HepG2 (cell line): ENCODE measurements at regions of chr5 and their contacts with region 1.

Region 1: DNA sequence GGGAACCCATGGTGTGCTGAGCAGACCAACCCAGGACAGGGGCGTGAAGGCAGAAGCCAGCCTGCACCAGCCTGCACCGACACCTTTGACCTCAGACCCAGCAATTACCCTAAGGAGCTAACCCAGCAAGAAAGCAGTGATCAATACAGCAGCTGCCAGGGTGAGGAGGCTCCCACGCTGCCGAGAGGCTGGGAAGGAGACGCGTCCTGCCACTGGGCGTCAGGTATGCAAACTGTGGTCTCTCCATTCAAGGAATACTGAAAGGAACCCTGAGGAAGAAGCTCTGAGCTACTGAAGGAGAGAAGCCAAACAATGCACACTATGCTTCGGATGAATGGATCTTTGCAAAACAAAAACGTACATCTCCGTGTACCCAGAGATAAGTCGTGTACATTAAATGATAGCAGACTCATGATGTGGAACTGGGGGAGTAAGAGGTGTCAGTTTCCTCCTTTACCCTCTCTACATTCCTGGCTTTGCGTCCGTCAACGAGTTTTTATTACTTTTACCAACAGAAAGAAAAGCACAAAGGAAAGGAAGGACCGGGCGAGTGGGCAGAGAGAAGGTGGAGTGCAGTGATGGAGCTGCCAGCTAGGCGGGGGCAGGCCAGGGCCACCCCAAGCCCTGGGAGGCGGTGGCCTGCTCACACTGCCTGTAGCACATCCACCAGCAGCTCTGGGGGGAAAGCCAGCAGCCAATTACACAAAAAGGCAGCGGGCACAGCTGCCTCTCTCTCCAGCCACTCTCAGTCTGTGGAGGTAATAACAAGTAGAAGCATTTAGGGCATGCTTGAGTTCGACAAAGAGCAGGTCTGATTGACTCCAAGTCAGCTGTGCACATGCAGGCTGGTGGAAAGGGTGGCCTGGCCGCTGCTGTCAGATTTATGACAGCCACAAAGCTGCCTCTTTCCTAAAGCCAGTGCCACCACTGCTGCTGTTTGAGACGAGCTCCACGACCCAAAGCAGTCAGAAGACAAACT is 29.3 kb downstream of the RASGEF1C start:
- DNase-seq: no peak
- ATAC-seq: no peak
- H3K4me3 ChIP-seq: no peak overlapping the region
- H3K27ac ChIP-seq: no peak overlapping the region
- H3K4me1 ChIP-seq: peaks cover 13% of the 10 kb centered on the region
- H3K27me3 ChIP-seq: peaks cover 5 to 36% of the 10 kb centered on the region in 2 experiments; a peak in 2 of 5 replicates
- CTCF ChIP-seq: no peak
- EP300 ChIP-seq: no peak
- POLR2A ChIP-seq: no peak
- RAD21 ChIP-seq: no peak

Region 2: DNA sequence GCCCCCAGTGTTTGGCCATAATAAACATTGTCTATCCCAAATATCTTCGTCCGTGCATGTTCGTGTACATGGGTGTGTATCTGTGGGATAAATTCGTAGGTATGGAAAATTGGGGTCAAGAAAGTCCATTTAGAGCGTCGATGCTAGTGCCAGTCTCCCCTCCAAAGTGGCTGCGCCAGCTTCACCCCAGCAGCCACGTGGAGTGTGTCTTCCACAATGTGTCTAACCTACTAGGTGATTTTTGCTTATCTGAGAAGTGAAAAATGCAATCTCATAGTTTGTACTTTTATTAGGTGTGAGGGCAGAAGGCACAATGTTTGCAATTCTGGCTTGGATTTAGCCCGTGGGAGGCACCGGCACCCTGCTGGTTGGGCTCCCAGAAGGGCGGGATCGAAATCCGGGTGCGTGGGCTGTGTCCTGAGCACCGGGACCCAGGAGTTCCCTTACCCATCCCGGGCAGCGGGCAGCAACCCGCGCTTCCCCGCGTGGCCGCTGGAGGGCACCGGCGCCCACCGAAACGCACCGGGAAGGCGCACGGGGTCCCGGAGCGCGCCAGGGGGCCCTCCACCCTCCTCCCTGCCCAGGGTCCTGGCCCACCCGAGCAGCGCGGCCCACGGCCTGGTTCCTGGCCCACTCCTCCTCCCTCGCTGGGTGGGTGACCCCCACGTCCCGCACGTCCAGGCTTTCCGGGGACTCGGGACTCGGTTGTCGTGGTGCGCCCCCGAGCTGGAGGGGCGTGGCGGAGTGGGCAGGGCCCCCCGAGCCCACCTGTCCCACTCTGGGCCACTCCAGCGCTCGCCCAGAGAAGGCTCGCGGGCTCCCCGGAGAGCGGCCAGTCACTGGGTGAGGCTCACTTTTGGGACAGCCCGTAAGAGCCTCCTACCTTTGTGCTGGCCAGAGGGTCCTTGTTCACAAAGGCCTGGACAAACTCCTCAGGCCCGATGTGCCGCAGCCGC is 52.7 kb before region 1 on chr5:
- CTCF ChIA-PET with region 1: no interaction called
- POLR2A ChIA-PET with region 1: no interaction called
- in situ Hi-C with region 1: no loop called
- intact Hi-C with region 1: loop called (anchors 1 kb)
- DNase-seq: no peak
- ATAC-seq: peak; percentile 79
- H3K4me3 ChIP-seq: peak overlapping the region in 1 of 3 experiments; percentile 16; a peak in 1 of 6 replicates
- H3K27ac ChIP-seq: no peak overlapping the region
- H3K4me1 ChIP-seq: no peaks in the 10 kb centered on the region
- H3K27me3 ChIP-seq: peaks cover 8 to 56% of the 10 kb centered on the region in 2 experiments
- CTCF ChIP-seq: peak; percentile 91
- EP300 ChIP-seq: no peak
- POLR2A ChIP-seq: no peak
- RAD21 ChIP-seq: peak; percentile 82

Region 3: GRCh38 chr5:180885872-180886418 is 706.2 kb after region 1 on chr5:
- CTCF ChIA-PET with region 1: no interaction called
- POLR2A ChIA-PET with region 1: no interaction called
- in situ Hi-C with region 1: no loop called
- intact Hi-C with region 1: loop called (anchors 5 kb)
- DNase-seq: peak; percentile 90
- ATAC-seq: peak; percentile 100
- H3K4me3 ChIP-seq: peak overlapping the region in 1 of 3 experiments; percentile 50; a peak in 2 of 6 replicates
- H3K27ac ChIP-seq: peak overlapping the region; percentile 32
- H3K4me1 ChIP-seq: peaks cover 21% of the 10 kb centered on the region
- H3K27me3 ChIP-seq: no peaks in the 10 kb centered on the region
- CTCF ChIP-seq: peak; percentile 49
- EP300 ChIP-seq: peak in 1 of 2 experiments; percentile 55; a peak in 2 of 4 replicates
- POLR2A ChIP-seq: no peak
- RAD21 ChIP-seq: peak; percentile 45; the same call in 1 of the 2 replicates